ENCODE measurements at regions of chr12 and their contacts with region 1.

Region 1: DNA sequence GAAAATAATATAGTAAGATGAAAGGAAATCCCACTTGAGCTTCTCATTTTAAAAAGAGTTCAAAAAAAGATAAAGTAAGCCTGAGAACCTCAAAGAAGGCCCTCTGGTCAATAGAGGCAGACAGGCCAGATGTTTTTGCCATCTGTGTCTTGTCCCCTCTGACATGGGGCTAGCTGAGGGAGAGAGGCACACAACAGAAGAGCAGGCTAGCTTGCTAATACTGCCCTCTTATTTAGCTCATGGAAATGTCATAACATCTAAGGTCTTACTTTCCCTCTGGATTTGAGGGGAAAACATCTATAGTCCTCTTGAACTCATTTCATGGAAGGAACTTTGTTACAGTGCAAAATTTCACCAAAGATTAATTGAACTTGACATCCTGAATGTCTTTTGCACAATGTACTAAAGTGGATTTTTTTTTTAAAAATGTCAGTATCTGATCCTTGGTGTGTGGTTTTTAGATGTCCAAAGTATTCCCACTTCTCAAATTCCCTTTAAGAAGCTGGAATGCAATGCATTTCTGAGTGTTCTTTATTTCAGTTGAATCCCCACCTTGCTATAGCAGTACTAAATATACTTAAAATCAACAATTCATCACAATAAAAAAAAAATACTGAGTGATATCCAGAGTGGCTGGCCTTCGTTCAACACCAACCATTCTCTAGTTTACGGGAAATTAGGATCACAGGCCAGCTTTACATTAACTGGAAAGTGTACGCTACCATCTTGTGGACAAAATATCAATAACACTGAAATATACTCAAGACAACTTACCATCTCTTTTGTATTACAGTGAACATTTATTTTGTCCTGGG is 176.7 kb downstream of the PAH start:
- DNase-seq: peak; percentile 12 to 58
- ATAC-seq: peak; percentile 81 to 87; a peak in 5 of 6 replicates
- H3K4me3 ChIP-seq: no peak overlapping the region
- H3K27ac ChIP-seq: peak overlapping the region in 1 of 2 experiments; percentile 46; a peak in 2 of 6 replicates
- H3K4me1 ChIP-seq: no peaks in the 10 kb centered on the region
- CTCF ChIP-seq: peak; percentile 69
- EP300 ChIP-seq: no peak
- POLR2A ChIP-seq: no peak
- RAD21 ChIP-seq: peak; percentile 81 to 88

Region 2: DNA sequence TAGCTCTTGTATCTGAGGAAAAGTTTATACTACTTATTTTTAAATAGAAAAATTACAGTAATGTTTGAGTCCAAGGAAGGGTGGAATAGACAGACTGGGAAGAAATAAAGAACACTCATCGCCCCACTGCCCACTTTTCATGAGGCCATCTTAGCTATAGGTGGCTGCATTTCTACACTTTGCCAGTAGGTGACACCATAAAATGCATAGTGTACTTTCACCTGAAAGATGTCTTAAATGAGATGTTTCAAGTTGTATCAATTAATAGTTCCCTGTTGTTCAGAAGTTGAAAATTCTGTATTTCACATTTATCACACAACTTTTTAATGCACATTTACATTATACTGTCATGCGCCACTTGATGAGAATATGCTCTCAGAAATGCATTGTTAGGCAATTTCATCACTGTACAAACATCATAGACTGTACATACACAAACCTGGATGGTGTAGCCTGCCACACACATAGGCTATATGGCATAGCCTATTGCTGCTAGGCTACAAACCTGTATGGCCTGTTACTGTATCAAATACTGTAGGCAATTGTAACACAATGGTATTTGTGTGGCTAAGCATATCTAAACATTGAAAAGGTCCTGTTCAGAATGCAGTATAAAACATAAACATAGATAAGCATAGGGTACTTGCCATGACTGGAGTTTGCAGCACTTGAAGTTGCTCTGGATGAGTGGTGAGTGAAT is 570.3 kb before region 1 on chr12:
- CTCF ChIA-PET with region 1: interaction called, 17 read pairs
- POLR2A ChIA-PET with region 1: no interaction called
- DNase-seq: peak in 1 of 2 experiments; percentile 51
- ATAC-seq: peak; percentile 68 to 84; a peak in 5 of 6 replicates
- H3K4me3 ChIP-seq: no peak overlapping the region
- H3K27ac ChIP-seq: no peak overlapping the region
- H3K4me1 ChIP-seq: peaks cover 11% of the 10 kb centered on the region; the same call in 2 of the 3 replicates
- CTCF ChIP-seq: peak; percentile 71
- EP300 ChIP-seq: no peak
- POLR2A ChIP-seq: no peak
- RAD21 ChIP-seq: peak; percentile 67 to 71

Region 3: DNA sequence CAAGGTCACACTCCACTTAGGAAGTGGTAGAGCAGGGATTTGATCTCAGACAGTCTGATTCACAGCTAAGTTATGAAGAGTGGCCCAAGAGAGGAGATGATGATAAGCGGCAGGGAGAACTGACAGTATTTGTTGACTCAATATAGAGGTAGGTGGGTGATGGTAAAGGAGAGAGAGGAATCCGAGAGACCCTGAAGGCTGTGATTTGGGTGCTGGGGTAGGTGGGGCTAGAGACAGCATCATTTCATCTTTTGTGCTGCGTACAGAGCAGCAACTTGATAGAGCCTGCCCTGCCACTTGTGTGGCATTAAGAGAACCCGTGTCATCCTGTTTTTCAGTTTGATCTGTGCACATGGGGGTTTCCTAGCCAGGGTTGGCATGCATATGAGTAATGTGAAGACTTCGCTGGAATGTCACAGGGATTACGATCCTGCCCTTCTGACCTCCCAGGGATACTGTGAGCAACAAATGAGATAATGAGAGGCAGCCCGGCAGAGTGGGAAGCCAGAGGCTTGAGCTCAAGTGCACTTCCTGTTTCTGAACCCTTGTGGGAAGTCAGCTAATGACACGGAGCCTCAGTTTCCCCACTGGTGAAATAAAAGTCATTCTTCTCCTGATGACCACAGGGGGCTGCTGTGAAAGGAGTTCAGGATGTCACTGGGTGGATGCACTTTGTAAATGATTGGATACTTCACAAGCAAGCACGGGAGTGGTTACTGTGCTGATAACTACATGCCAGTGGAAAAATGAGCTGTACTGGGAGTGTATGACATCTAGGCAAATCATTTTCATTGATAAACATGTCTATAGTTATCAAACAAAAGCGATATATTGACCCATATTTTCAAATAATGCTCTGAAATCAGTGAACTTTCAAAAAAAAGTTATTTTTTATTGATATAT is 200.4 kb before region 1 on chr12:
- CTCF ChIA-PET with region 1: interaction called, 13 read pairs
- POLR2A ChIA-PET with region 1: no interaction called
- DNase-seq: peak; percentile 74 to 96
- ATAC-seq: peak; percentile 94
- H3K4me3 ChIP-seq: no peak overlapping the region
- H3K27ac ChIP-seq: peak overlapping the region; percentile 87 to 97
- H3K4me1 ChIP-seq: peaks cover 40% of the 10 kb centered on the region
- CTCF ChIP-seq: no peak
- EP300 ChIP-seq: peak; percentile 66 to 92; a peak in 4 of 5 replicates
- POLR2A ChIP-seq: no peak
- RAD21 ChIP-seq: peak in 1 of 2 experiments; percentile 59; a peak in 3 of 5 replicates

Region 4: GRCh38 chr12:102757154-102757881 is 17.0 kb after region 1 on chr12:
- CTCF ChIA-PET with region 1: interaction called, 15 read pairs
- POLR2A ChIA-PET with region 1: no interaction called
- DNase-seq: no peak
- ATAC-seq: no peak
- H3K4me3 ChIP-seq: no peak overlapping the region
- H3K27ac ChIP-seq: no peak overlapping the region
- H3K4me1 ChIP-seq: no peaks in the 10 kb centered on the region
- CTCF ChIP-seq: no peak
- EP300 ChIP-seq: no peak
- POLR2A ChIP-seq: no peak
- RAD21 ChIP-seq: no peak

Region 5: GRCh38 chr12:102896067-102896466 is 155.7 kb after region 1 on chr12:
- CTCF ChIA-PET with region 1: no interaction called
- POLR2A ChIA-PET with region 1: no interaction called
- DNase-seq: no peak
- ATAC-seq: no peak
- H3K4me3 ChIP-seq: no peak overlapping the region
- H3K27ac ChIP-seq: no peak overlapping the region
- H3K4me1 ChIP-seq: peaks cover 17% of the 10 kb centered on the region; the same call in 2 of the 3 replicates
- CTCF ChIP-seq: no peak
- EP300 ChIP-seq: no peak
- POLR2A ChIP-seq: no peak
- RAD21 ChIP-seq: no peak